Endothelial cell of umbilical vein (primary cell): ENCODE measurements at regions of chr19 and their contacts with region 1.

Region 1: DNA sequence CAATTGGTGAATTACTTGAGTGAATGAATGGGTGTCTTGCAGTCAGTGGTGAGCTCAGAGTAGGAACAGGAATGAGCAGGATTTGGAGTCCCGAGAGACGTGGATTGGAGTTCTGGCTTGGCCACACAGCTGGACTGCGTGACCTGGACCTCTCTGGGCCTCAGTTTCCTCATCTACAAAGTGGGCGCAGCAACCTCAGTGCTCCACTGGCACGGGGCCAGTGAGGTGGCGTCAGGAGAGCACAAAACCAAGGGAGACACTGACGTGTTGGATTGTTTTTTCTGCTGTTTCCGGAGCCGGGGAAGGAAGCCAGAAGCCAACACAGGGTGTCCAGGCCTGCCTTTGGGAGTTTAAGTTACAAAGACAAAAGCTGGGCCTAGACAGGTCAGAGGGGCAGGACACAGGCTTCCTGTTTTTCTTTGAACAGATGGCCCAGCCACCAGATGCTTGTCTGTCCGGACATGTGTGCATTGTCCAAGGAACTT is 6.5 kb upstream of the DOCK6 start:
- DNase-seq: peak; percentile 100
- H3K4me3 ChIP-seq: no peak overlapping the region
- H3K27ac ChIP-seq: peak overlapping the region; percentile 99
- H3K4me1 ChIP-seq: peaks cover 47% of the 10 kb centered on the region
- H3K27me3 ChIP-seq: no peaks in the 10 kb centered on the region
- CTCF ChIP-seq: no peak
- POLR2A ChIP-seq: peak; percentile 89

Region 2: GRCh38 chr19:10907925-10908324 is 360.9 kb before region 1 on chr19:
- CTCF ChIA-PET with region 1: no interaction called
- POLR2A ChIA-PET with region 1: no interaction called
- dilution Hi-C with region 1: no loop called
- intact Hi-C with region 1: no loop called
- DNase-seq: no peak
- H3K4me3 ChIP-seq: no peak overlapping the region
- H3K27ac ChIP-seq: no peak overlapping the region
- H3K4me1 ChIP-seq: no peaks in the 10 kb centered on the region
- H3K27me3 ChIP-seq: no peaks in the 10 kb centered on the region
- CTCF ChIP-seq: no peak
- POLR2A ChIP-seq: no peak

Region 3: GRCh38 chr19:11256189-11256588 is 12.6 kb before region 1 on chr19:
- CTCF ChIA-PET with region 1: interaction called, 7 read pairs
- POLR2A ChIA-PET with region 1: interaction called, 4 read pairs
- dilution Hi-C with region 1: no loop called
- intact Hi-C with region 1: loop called (anchors 1 kb)
- DNase-seq: peak; percentile 60
- H3K4me3 ChIP-seq: no peak overlapping the region
- H3K27ac ChIP-seq: no peak overlapping the region
- H3K4me1 ChIP-seq: peaks cover 28% of the 10 kb centered on the region
- H3K27me3 ChIP-seq: no peaks in the 10 kb centered on the region
- CTCF ChIP-seq: no peak
- POLR2A ChIP-seq: no peak